ENCODE measurements at regions of chr6 and their contacts with region 1.

Region 1: GRCh38 chr6:35415065-35415991 is 36.8 kb upstream of the FANCE start:
- DNase-seq: peak; percentile 99
- ATAC-seq: peak; percentile 90
- H3K4me3 ChIP-seq: peak overlapping the region; percentile 8; the same call in 1 of the 2 replicates
- H3K27ac ChIP-seq: peak overlapping the region; percentile 97
- H3K4me1 ChIP-seq: peaks cover 25% of the 10 kb centered on the region
- H3K27me3 ChIP-seq: no peaks in the 10 kb centered on the region
- CTCF ChIP-seq: peak; percentile 80

Region 2: DNA sequence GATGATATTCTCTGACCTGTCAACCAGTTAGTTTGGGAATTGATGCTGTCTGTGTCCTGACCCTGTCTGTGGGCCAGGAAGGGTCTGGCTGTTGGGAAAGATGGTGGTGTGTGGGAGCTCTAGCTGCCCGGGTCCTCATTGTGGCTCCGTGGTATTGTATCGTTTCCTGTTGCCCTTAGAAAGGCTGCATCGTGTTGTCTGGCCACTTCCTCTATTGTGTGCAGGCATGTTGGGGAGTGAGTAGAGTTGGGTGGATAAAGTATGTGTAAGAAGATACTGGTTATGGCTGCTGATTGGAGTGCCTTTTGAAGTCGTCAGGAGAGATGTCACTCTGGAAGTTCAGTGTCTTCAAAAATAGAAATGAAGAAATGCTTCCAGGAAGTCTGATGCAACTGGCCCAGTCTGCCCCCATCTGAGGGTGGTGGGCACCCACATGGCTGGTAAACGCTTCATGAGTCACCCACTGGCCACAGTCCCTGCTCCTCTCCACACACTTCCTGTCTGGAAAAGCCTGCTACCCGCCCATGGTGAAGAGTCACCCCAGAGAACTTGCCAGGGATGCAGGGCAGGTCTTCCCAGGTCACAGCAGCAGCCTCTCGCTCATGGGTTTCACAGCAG is 45.1 kb before region 1 on chr6:
- CTCF ChIA-PET with region 1: interaction called, 3 read pairs
- POLR2A ChIA-PET with region 1: interaction called, 22 read pairs
- intact Hi-C with region 1: no loop called
- DNase-seq: peak; percentile 94
- ATAC-seq: peak; percentile 89
- H3K4me3 ChIP-seq: no peak overlapping the region
- H3K27ac ChIP-seq: peak overlapping the region; percentile 92
- H3K4me1 ChIP-seq: peaks cover 42% of the 10 kb centered on the region
- H3K27me3 ChIP-seq: no peaks in the 10 kb centered on the region
- CTCF ChIP-seq: no peak

Region 3: GRCh38 chr6:35400901-35401311 is 14.4 kb before region 1 on chr6:
- CTCF ChIA-PET with region 1: interaction called, 11 read pairs
- POLR2A ChIA-PET with region 1: interaction called, 3 read pairs
- intact Hi-C with region 1: loop called (anchors 2 kb)
- DNase-seq: peak; percentile 98
- ATAC-seq: peak; percentile 92
- H3K4me3 ChIP-seq: peak overlapping the region; percentile 10; the same call in 1 of the 2 replicates
- H3K27ac ChIP-seq: peak overlapping the region; percentile 98
- H3K4me1 ChIP-seq: peaks cover 53% of the 10 kb centered on the region
- H3K27me3 ChIP-seq: no peaks in the 10 kb centered on the region
- CTCF ChIP-seq: no peak

Region 4: GRCh38 chr6:35435074-35435837 is 19.9 kb after region 1 on chr6:
- CTCF ChIA-PET with region 1: no interaction called
- POLR2A ChIA-PET with region 1: interaction called, 11 read pairs
- intact Hi-C with region 1: no loop called
- DNase-seq: no peak
- ATAC-seq: no peak
- H3K4me3 ChIP-seq: no peak overlapping the region
- H3K27ac ChIP-seq: no peak overlapping the region
- H3K4me1 ChIP-seq: no peaks in the 10 kb centered on the region
- H3K27me3 ChIP-seq: no peaks in the 10 kb centered on the region
- CTCF ChIP-seq: no peak

Region 5: GRCh38 chr6:35552285-35552917 is 137.1 kb after region 1 on chr6:
- CTCF ChIA-PET with region 1: no interaction called
- POLR2A ChIA-PET with region 1: no interaction called
- intact Hi-C with region 1: no loop called
- DNase-seq: peak; percentile 80
- ATAC-seq: peak; percentile 40; the same call in 1 of the 2 replicates
- H3K4me3 ChIP-seq: no peak overlapping the region
- H3K27ac ChIP-seq: no peak overlapping the region
- H3K4me1 ChIP-seq: no peaks in the 10 kb centered on the region
- H3K27me3 ChIP-seq: no peaks in the 10 kb centered on the region
- CTCF ChIP-seq: peak; percentile 94

Measured in PC-3 (cell line).